Left lung (tissue), 14 donors: ENCODE measurements at regions of chr10 and their contacts with region 1.

Region 1: DNA sequence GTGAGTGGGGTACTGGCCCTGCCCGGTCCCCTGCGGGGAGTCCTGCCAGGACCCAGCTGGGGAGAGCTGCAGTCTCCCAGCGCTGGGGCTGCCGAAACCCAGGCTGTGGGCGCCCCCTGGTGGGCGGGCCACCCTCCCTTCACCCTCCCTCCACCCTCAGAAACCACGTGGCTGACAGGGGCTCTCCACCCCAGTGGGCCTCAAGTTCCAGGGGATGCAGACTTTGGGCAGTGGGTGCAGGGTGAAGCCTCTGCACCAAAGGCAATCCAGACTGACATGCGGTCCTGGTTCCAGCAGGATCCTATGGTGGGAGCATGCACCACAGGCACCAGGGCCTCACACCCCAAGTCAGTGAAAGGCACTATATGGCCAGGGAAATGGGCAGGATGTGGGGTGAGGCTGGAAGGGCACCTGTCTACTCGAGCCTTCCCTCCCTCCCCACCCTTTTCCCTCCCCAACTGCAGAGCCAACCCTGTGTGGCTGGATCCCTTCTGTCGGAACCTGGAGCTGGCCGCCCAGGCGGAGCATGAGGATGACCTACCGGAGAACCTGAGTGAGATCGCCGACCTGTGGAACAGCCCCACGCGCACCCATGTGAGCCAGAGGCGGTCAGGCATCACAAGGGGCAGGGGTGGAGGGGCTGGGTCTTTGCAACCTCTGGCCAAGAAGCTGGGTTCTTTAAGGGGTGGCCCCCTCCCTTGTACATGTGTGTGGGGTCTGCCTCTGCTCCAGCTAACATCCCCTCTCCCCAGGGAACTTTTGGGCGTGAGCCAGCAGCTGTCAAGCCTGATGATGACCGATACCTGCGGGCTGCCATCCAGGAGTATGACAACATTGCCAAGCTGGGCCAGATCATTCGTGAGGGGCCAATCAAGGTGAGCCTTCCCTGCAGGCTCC is 38.8 kb downstream of the PSAP start:
- DNase-seq: peak; percentile 41 to 95 (median 72)
- ATAC-seq: peak; percentile 87
- H3K4me3 ChIP-seq: no peak overlapping the region
- H3K27ac ChIP-seq: no peak overlapping the region
- H3K4me1 ChIP-seq: peaks cover 0 to 32% of the 10 kb centered on the region in 2 donors
- H3K27me3 ChIP-seq: no peaks in the 10 kb centered on the region
- CTCF ChIP-seq: peak; percentile 75 to 91

Region 2: DNA sequence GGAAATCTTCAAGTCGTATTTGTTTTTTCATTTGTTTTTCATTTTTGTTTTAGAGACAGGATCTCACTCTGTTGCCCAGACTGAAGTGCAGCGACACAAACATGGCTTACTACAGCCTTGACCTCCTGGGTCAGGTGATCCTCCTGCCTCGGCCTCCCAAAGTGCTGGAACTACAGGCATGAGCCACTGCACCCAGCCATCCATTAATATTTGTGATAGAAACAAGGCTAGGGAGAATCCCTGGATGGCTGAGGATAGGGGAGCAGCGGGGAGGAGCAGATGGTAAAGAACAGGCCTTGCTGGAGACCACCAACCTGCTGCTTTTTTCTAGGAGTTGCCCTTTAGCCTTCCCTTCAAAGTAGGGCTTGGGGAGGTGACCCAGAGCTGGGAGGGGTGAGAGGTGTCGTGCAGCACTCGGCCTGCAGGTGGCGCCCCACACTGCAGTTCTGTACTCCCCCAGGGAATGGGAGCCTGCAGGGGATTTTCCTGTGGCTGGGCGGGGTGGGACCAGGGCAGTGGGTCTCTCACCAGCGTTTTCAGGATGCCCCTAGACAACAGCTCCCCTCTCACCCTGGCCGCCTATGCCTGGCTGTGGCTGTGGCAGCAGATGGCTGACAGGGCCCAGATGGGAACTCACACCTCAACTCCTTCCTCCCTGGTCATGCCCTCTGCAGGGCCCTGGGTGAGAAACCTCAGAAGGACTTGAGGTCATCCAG is 428.1 kb before region 1 on chr10:
- intact Hi-C with region 1: loop called in 1 of 2 experiments (anchors 10 kb)
- DNase-seq: peak in 3 of 4 donors; percentile 61 to 94 (median 66)
- ATAC-seq: peak; percentile 98
- H3K4me3 ChIP-seq: no peak overlapping the region
- H3K27ac ChIP-seq: no peak overlapping the region
- H3K4me1 ChIP-seq: peaks cover 0 to 3% of the 10 kb centered on the region in 2 donors
- H3K27me3 ChIP-seq: no peaks in the 10 kb centered on the region
- CTCF ChIP-seq: peak; percentile 86 to 94

Region 3: DNA sequence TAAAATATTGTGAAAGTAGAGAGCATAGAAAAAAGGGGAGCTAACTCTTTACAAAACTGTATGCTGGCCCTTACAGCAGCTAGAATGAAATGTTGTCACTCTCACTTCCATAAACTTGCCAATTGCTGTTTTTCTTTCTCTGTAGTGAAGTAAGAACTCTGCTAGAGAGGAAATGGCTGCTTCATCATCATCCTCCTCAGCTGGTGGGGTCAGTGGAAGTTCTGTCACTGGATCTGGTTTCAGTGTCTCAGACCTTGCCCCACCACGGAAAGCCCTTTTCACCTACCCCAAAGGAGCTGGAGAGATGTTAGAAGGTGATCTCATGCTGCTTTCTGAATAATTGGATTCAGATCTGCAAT is 411.5 kb after region 1 on chr10:
- intact Hi-C with region 1: no loop called
- DNase-seq: no peak
- ATAC-seq: peak; percentile 43
- H3K4me3 ChIP-seq: no peak overlapping the region
- H3K27ac ChIP-seq: peak overlapping the region; percentile 28 to 70
- H3K4me1 ChIP-seq: peaks cover 0 to 44% of the 10 kb centered on the region in 2 donors
- H3K27me3 ChIP-seq: no peaks in the 10 kb centered on the region
- CTCF ChIP-seq: no peak